ENCODE measurements at regions of chr9 and their contacts with region 1.

Region 1: GRCh38 chr9:69243116-69243515 is 69.0 kb downstream of the TJP2 start:
- DNase-seq: no peak
- H3K4me3 ChIP-seq: no peak overlapping the region
- H3K27ac ChIP-seq: no peak overlapping the region
- H3K4me1 ChIP-seq: no peaks in the 10 kb centered on the region
- H3K27me3 ChIP-seq: no peaks in the 10 kb centered on the region
- CTCF ChIP-seq: no peak
- EP300 ChIP-seq: no peak
- POLR2A ChIP-seq: no peak
- RAD21 ChIP-seq: no peak

Region 2: GRCh38 chr9:69232135-69232534 is 11.0 kb before region 1 on chr9:
- CTCF ChIA-PET with region 1: interaction called, 7 read pairs
- POLR2A ChIA-PET with region 1: interaction called, 11 read pairs
- DNase-seq: no peak
- H3K4me3 ChIP-seq: peak overlapping the region in 1 of 4 experiments; percentile 4; a peak in 1 of 8 replicates
- H3K27ac ChIP-seq: no peak overlapping the region; the same call in 1 of the 2 replicates
- H3K4me1 ChIP-seq: peaks cover 1 to 14% (median 9%) of the 10 kb centered on the region in 4 experiments; a peak in 5 of 7 replicates
- H3K27me3 ChIP-seq: no peaks in the 10 kb centered on the region
- CTCF ChIP-seq: no peak
- EP300 ChIP-seq: no peak
- POLR2A ChIP-seq: no peak
- RAD21 ChIP-seq: no peak

Measured in H1 (cell line).